Gastrocnemius medialis (tissue), 4 donors: ENCODE measurements at regions of chr22 and their contacts with region 1.

Region 1: DNA sequence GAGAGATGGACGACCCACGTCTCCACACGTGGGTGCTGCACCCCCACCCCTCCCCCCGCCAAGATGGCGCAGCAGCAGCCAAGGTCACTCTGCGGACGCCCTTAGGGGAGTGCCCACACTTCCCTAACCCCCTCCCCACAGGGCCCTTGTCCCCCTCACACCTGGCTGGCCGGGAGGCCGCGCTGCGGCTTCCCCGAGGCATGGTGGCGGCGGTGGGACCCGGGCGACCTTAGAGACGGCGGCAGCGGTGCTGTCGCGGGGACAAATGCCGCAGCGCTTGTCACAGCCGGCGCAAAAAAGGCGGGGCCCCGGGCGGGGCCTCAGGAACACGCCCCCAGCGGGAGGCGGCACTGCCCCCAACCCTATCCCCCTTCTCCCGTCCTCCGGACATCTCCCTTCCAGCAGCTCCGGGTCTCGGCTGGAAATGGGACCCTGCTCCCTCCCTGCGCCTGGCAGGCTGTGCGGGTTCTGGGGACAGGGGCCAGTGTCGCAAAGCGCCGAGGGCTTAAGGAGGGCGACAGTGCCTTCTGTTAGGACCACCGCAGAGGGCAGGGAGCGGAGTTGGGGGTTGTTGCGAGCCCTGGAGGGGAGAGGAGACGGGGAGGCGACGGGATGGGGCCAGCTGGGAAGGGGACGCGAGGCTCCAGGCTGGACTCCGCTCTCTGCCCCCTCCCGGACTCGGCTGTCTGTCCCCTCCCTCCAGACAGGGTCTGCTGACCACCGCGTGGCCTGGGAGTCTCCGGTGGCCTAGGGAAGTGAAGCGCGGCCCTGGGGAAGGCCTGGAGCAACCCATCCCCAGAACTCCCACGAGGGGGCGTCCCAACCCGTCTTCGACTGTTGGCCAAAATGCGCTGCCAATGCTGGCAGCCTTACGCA is at the start of gene CHCHD10:
- DNase-seq: peak; percentile 88 to 90
- ATAC-seq: peak; percentile 74 to 82
- H3K4me3 ChIP-seq: peak within 1 kb of the TSS; percentile 78 to 94 (median 90)
- H3K27ac ChIP-seq: peak within 1 kb of the TSS; percentile 96 to 100 (median 100)
- H3K4me1 ChIP-seq: peaks cover 28 to 39% of the 10 kb centered on the region in 2 donors
- H3K27me3 ChIP-seq: no peaks in the 10 kb centered on the region
- CTCF ChIP-seq: peak; percentile 84 to 96 (median 93)
- POLR2A ChIP-seq: peak; percentile 98
- total RNA-seq, gene CHCHD10: 157 to 290 (median 181) TPM

Region 2: GRCh38 chr22:23521441-23522113 is 246.3 kb before region 1 on chr22:
- in situ Hi-C with region 1: no loop called
- intact Hi-C with region 1: loop called (anchors 5 kb)
- DNase-seq: peak; percentile 56 to 80
- ATAC-seq: peak; percentile 81 to 88
- H3K4me3 ChIP-seq: peak overlapping the region; percentile 56 to 63 (median 58)
- H3K27ac ChIP-seq: peak overlapping the region; percentile 66 to 84 (median 72)
- H3K4me1 ChIP-seq: peaks cover 8 to 13% of the 10 kb centered on the region in 2 donors
- H3K27me3 ChIP-seq: no peaks in the 10 kb centered on the region
- CTCF ChIP-seq: no peak
- POLR2A ChIP-seq: peak; percentile 17 to 35

Region 3: GRCh38 chr22:23626286-23626975 is 141.5 kb before region 1 on chr22:
- in situ Hi-C with region 1: no loop called
- intact Hi-C with region 1: loop called (anchors 5 kb)
- DNase-seq: no peak
- ATAC-seq: no peak
- H3K4me3 ChIP-seq: no peak overlapping the region
- H3K27ac ChIP-seq: no peak overlapping the region
- H3K4me1 ChIP-seq: peaks cover 0 to 6% of the 10 kb centered on the region in 2 donors
- H3K27me3 ChIP-seq: no peaks in the 10 kb centered on the region
- CTCF ChIP-seq: no peak
- POLR2A ChIP-seq: no peak

Region 4: DNA sequence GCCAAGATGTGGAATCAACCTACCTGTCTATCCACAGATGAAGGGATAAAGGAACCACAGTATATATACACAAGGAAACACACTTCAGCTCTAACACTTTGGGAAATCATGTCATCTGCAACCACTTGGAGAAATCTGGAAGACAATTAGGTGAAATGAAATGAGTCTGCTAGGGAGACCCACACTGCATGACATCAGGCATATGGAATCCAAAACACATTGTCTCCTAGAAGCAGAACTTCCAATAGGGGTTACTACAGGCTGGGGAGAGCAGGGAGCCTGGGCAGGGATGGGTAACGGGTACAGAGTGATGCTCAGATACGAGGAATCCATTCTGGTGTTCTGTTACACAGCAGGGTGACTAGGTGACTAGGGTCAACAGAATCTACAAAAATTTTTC is 58.8 kb before region 1 on chr22:
- in situ Hi-C with region 1: no loop called
- intact Hi-C with region 1: no loop called
- DNase-seq: no peak
- ATAC-seq: no peak
- H3K4me3 ChIP-seq: no peak overlapping the region
- H3K27ac ChIP-seq: no peak overlapping the region
- H3K4me1 ChIP-seq: no peaks in the 10 kb centered on the region
- H3K27me3 ChIP-seq: no peaks in the 10 kb centered on the region
- CTCF ChIP-seq: no peak
- POLR2A ChIP-seq: no peak

Region 5: GRCh38 chr22:23750714-23751440 is 17.0 kb before region 1 on chr22 and contains the start of gene ZNF70:
- in situ Hi-C with region 1: no loop called
- intact Hi-C with region 1: loop called (anchors 2 kb)
- DNase-seq: peak; percentile 67 to 85
- ATAC-seq: peak; percentile 73 to 80
- H3K4me3 ChIP-seq: peak within 1 kb of the TSS; percentile 62 to 89 (median 76)
- H3K27ac ChIP-seq: peak within 1 kb of the TSS; percentile 78 to 89 (median 84)
- H3K4me1 ChIP-seq: peaks cover 9 to 10% of the 10 kb centered on the region in 2 donors
- H3K27me3 ChIP-seq: no peaks in the 10 kb centered on the region
- CTCF ChIP-seq: peak in 3 of 5 experiments; percentile 12 to 30 (median 22)
- POLR2A ChIP-seq: peak; percentile 73 to 74
- total RNA-seq, gene ZNF70: 3.1 to 6.3 (median 4.2) TPM

Region 6: GRCh38 chr22:23849009-23850006 is 81.4 kb after region 1 on chr22:
- in situ Hi-C with region 1: loop called in 3 of 4 experiments (anchors 5 to 10 kb)
- intact Hi-C with region 1: loop called (anchors 1 kb)
- DNase-seq: peak; percentile 53 to 77
- ATAC-seq: peak; percentile 58 to 72
- H3K4me3 ChIP-seq: peak overlapping the region in 2 of 4 donors; percentile 8 to 16
- H3K27ac ChIP-seq: no peak overlapping the region
- H3K4me1 ChIP-seq: peaks cover 26 to 34% of the 10 kb centered on the region in 2 donors
- H3K27me3 ChIP-seq: no peaks in the 10 kb centered on the region
- CTCF ChIP-seq: peak; percentile 95 to 100 (median 99)
- POLR2A ChIP-seq: no peak